ENCODE measurements at regions of chr19 and their contacts with region 1.

Region 1: DNA sequence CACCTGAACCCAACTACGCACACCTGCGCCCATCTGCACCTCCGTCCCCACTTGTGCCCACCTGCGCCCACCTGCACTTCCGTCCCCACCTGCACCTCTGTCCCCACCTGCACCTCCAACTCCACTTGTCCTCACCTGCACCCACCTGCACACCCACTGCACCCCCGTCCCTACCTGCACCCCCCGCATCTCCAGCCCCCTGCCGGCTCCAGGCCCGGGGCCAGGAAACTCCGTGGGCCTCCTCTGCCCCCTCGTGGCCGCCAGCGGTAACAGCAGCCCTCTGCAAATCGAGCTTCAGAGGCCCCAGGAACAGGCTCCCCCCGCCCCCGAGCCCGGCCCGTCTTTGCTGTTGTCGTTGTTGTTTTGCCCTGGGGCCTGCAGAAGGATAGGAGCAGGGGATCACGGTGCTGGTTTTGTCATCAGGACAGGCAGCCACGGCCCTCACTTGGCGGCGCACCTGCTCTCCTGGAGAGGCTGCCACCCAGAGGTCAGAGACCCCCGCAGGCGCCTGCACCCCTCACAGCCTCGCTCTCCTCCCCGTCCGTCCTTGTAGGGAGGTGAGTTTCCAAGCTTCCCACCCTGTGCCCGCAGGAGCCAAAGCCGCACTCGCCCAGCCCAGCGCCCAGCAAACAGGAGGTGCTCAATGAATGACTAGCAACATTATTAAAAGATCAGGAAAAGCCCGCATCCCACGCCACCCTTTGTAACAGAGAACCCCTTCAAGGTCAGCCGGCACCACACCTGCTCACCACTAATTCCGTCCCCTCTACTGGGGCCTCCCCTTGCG is 65.4 kb downstream of the GNG7 start:
- DNase-seq: peak; percentile 69 to 72 (median 72)
- H3K4me3 ChIP-seq: no peak overlapping the region
- H3K4me3 Mint-ChIP-seq: peak overlapping the region in 1 of 8 donors; percentile 29
- H3K27ac ChIP-seq: no peak overlapping the region
- H3K27ac Mint-ChIP-seq: no peak overlapping the region
- H3K4me1 ChIP-seq: peaks cover 10% of the 10 kb centered on the region
- H3K4me1 Mint-ChIP-seq: peaks cover 0 to 6% (median 4%) of the 10 kb centered on the region in 4 donors
- H3K27me3 ChIP-seq: no peaks in the 10 kb centered on the region
- H3K27me3 Mint-ChIP-seq: no peaks in the 10 kb centered on the region

Region 2: DNA sequence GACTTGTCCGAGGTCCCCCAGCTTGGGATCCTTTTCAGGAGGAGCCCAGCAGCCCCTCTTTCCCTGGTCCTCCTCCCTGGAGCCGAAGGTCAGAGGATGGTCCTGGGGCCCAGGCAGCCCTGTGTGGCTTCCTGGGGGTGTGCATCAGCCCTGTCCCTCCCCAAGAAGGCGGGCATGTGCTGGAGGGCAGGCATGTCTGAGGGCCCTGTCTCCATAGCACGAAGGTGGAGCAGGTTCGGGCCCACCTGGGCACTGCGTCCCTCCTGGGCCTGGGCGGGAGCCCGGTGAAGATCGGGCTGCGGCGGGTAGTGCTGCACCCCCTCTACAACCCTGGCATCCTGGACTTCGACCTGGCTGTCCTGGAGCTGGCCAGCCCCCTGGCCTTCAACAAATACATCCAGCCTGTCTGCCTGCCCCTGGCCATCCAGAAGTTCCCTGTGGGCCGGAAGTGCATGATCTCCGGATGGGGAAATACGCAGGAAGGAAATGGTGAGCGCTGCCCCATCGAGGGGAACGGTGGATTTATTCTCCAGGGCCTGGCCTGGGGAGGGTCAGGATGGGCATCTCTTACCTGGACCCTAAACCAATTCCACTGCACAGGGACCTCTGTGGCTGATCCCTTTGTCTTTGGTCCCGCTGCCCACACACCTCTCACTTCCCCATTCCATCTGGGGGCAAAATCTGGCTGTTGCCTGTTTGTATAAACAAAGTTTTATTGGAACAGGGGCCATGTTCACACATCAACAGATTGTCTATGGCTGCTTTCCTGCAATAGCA is 220.6 kb before region 1 on chr19:
- CTCF ChIA-PET with region 1: no interaction called
- POLR2A ChIA-PET with region 1: no interaction called
- intact Hi-C with region 1: no loop called
- DNase-seq: no peak
- H3K4me3 ChIP-seq: no peak overlapping the region
- H3K4me3 Mint-ChIP-seq: no peak overlapping the region
- H3K27ac ChIP-seq: no peak overlapping the region
- H3K27ac Mint-ChIP-seq: no peak overlapping the region
- H3K4me1 ChIP-seq: no peaks in the 10 kb centered on the region
- H3K4me1 Mint-ChIP-seq: peaks cover 0 to 2% (median 0%) of the 10 kb centered on the region in 4 donors
- H3K27me3 ChIP-seq: no peaks in the 10 kb centered on the region
- H3K27me3 Mint-ChIP-seq: peaks cover 0 to 3% of the 10 kb centered on the region in 2 donors

Region 3: GRCh38 chr19:2578901-2579677 is 58.0 kb before region 1 on chr19:
- CTCF ChIA-PET with region 1: interaction called, 5 read pairs
- POLR2A ChIA-PET with region 1: interaction called, 4 read pairs
- intact Hi-C with region 1: loop called (anchors 1 kb)
- DNase-seq: peak; percentile 48 to 59 (median 53)
- H3K4me3 ChIP-seq: peak overlapping the region in 1 of 2 donors; percentile 24
- H3K4me3 Mint-ChIP-seq: peak overlapping the region in 2 of 8 donors; percentile 60 to 62
- H3K27ac ChIP-seq: no peak overlapping the region
- H3K27ac Mint-ChIP-seq: peak overlapping the region in 2 of 7 donors; percentile 29 to 52
- H3K4me1 ChIP-seq: peaks cover 11% of the 10 kb centered on the region
- H3K4me1 Mint-ChIP-seq: peaks cover 0 to 12% (median 1%) of the 10 kb centered on the region in 4 donors
- H3K27me3 ChIP-seq: peaks cover 5% of the 10 kb centered on the region
- H3K27me3 Mint-ChIP-seq: peaks cover 4% of the 10 kb centered on the region in 2 donors

Region 4: GRCh38 chr19:2602391-2603181 is 34.5 kb before region 1 on chr19:
- CTCF ChIA-PET with region 1: interaction called, 18 read pairs
- POLR2A ChIA-PET with region 1: interaction called, 3 read pairs
- intact Hi-C with region 1: no loop called
- DNase-seq: no peak
- H3K4me3 ChIP-seq: no peak overlapping the region
- H3K4me3 Mint-ChIP-seq: no peak overlapping the region
- H3K27ac ChIP-seq: no peak overlapping the region
- H3K27ac Mint-ChIP-seq: peak overlapping the region in 2 of 7 donors; percentile 24 to 68
- H3K4me1 ChIP-seq: peaks cover 13% of the 10 kb centered on the region
- H3K4me1 Mint-ChIP-seq: peaks cover 7 to 18% (median 12%) of the 10 kb centered on the region in 4 donors
- H3K27me3 ChIP-seq: no peaks in the 10 kb centered on the region
- H3K27me3 Mint-ChIP-seq: no peaks in the 10 kb centered on the region

Region 5: GRCh38 chr19:2656533-2656932 is 19.4 kb after region 1 on chr19:
- CTCF ChIA-PET with region 1: no interaction called
- POLR2A ChIA-PET with region 1: no interaction called
- intact Hi-C with region 1: no loop called
- DNase-seq: no peak
- H3K4me3 ChIP-seq: no peak overlapping the region
- H3K4me3 Mint-ChIP-seq: no peak overlapping the region
- H3K27ac ChIP-seq: no peak overlapping the region
- H3K27ac Mint-ChIP-seq: no peak overlapping the region
- H3K4me1 ChIP-seq: no peaks in the 10 kb centered on the region
- H3K4me1 Mint-ChIP-seq: no peaks in the 10 kb centered on the region
- H3K27me3 ChIP-seq: no peaks in the 10 kb centered on the region
- H3K27me3 Mint-ChIP-seq: peaks cover 0 to 2% of the 10 kb centered on the region in 2 donors